HCT116 (cell line): ENCODE measurements at regions of chr10 and their contacts with region 1.

Region 1: GRCh38 chr10:101467286-101467770 is 113.4 kb downstream of the BTRC start:
- DNase-seq: peak; percentile 76
- ATAC-seq: peak; percentile 94
- H3K4me3 ChIP-seq: no peak overlapping the region
- H3K27ac ChIP-seq: no peak overlapping the region
- H3K4me1 ChIP-seq: no peaks in the 10 kb centered on the region
- H3K27me3 ChIP-seq: no peaks in the 10 kb centered on the region
- CTCF ChIP-seq: peak; percentile 85 to 99 (median 98)
- POLR2A ChIP-seq: no peak
- RAD21 ChIP-seq: peak; percentile 78

Region 2: GRCh38 chr10:101287997-101288635 is 179.2 kb before region 1 on chr10:
- CTCF ChIA-PET with region 1: interaction called, 30 read pairs
- POLR2A ChIA-PET with region 1: interaction called, 3 read pairs
- RAD21 ChIA-PET with region 1: interaction called in 1 of 2 experiments, 3 read pairs
- intact Hi-C with region 1: no loop called
- DNase-seq: peak; percentile 41
- ATAC-seq: peak; percentile 86
- H3K4me3 ChIP-seq: no peak overlapping the region
- H3K27ac ChIP-seq: no peak overlapping the region
- H3K4me1 ChIP-seq: no peaks in the 10 kb centered on the region; a peak in 1 of 4 replicates
- H3K27me3 ChIP-seq: no peaks in the 10 kb centered on the region
- CTCF ChIP-seq: peak; percentile 34 to 57 (median 45); a peak in 5 of 6 replicates
- POLR2A ChIP-seq: no peak
- RAD21 ChIP-seq: peak; percentile 72

Region 3: GRCh38 chr10:101379663-101380352 is 87.5 kb before region 1 on chr10:
- CTCF ChIA-PET with region 1: no interaction called
- POLR2A ChIA-PET with region 1: no interaction called
- RAD21 ChIA-PET with region 1: interaction called in 1 of 2 experiments, 10 read pairs
- intact Hi-C with region 1: no loop called
- DNase-seq: no peak
- ATAC-seq: no peak
- H3K4me3 ChIP-seq: no peak overlapping the region
- H3K27ac ChIP-seq: no peak overlapping the region
- H3K4me1 ChIP-seq: no peaks in the 10 kb centered on the region
- H3K27me3 ChIP-seq: no peaks in the 10 kb centered on the region
- CTCF ChIP-seq: no peak
- POLR2A ChIP-seq: no peak
- RAD21 ChIP-seq: no peak

Region 4: GRCh38 chr10:101446947-101447346 is 20.4 kb before region 1 on chr10:
- CTCF ChIA-PET with region 1: interaction called, 37 read pairs
- POLR2A ChIA-PET with region 1: no interaction called
- RAD21 ChIA-PET with region 1: no interaction called
- intact Hi-C with region 1: no loop called
- DNase-seq: no peak
- ATAC-seq: no peak
- H3K4me3 ChIP-seq: no peak overlapping the region
- H3K27ac ChIP-seq: no peak overlapping the region
- H3K4me1 ChIP-seq: no peaks in the 10 kb centered on the region
- H3K27me3 ChIP-seq: no peaks in the 10 kb centered on the region
- CTCF ChIP-seq: no peak
- POLR2A ChIP-seq: no peak
- RAD21 ChIP-seq: no peak

Region 5: DNA sequence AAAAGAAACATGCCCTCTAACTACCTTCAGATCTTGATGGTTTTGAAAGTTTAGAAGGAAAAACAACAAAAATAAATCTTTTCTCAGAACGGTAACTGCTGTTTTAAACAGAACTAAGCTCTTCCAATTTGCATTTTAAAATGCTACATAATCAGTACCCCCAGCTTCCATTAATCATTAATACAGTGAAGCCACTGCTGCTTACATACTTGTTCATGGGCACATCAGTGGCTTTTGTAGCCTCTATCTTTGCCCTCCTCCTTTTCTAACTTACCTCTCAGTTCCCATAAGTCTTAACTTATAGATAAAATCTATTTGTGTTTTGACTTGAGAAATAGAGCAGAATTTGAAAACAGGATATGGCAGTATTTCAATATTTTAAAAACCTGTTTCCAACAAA is 11.6 kb after region 1 on chr10:
- CTCF ChIA-PET with region 1: interaction called, 20 read pairs
- POLR2A ChIA-PET with region 1: no interaction called
- RAD21 ChIA-PET with region 1: no interaction called
- intact Hi-C with region 1: no loop called
- DNase-seq: no peak
- ATAC-seq: no peak
- H3K4me3 ChIP-seq: no peak overlapping the region
- H3K27ac ChIP-seq: no peak overlapping the region
- H3K4me1 ChIP-seq: no peaks in the 10 kb centered on the region
- H3K27me3 ChIP-seq: no peaks in the 10 kb centered on the region
- CTCF ChIP-seq: no peak
- POLR2A ChIP-seq: no peak
- RAD21 ChIP-seq: no peak

Region 6: DNA sequence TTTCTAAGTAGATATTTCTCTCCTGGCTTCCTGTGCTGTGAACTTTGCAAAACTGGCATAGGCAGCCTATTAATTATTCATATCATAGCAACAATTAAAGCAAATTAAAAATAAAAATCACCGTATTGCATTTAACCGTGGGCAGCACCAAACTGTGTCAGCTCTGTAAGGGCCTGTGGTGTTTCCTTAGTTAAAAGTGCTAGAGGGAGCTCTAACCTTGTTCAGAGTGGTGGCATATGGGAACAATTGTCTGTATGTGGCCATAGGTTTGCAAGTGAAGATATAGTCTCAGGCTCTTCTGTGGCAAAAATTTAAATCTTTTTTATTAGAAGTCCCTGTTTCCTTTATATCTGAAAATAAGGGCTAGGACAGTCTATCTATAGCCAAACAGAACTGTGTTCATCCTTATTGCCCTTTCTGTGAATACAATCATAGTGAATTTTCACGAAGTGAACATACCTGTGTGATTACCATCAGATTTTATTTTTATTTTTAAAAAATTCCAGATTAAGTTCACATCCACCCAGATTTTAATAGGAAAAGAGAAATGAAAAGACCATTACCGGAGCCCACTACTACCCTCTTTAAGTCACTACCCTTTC is 28.1 kb after region 1 on chr10:
- CTCF ChIA-PET with region 1: interaction called, 12 read pairs
- POLR2A ChIA-PET with region 1: no interaction called
- RAD21 ChIA-PET with region 1: no interaction called
- intact Hi-C with region 1: no loop called
- DNase-seq: peak; percentile 12
- ATAC-seq: peak; percentile 99
- H3K4me3 ChIP-seq: no peak overlapping the region
- H3K27ac ChIP-seq: no peak overlapping the region
- H3K4me1 ChIP-seq: no peaks in the 10 kb centered on the region
- H3K27me3 ChIP-seq: no peaks in the 10 kb centered on the region
- CTCF ChIP-seq: peak; percentile 47 to 60 (median 59); a peak in 5 of 6 replicates
- POLR2A ChIP-seq: no peak
- RAD21 ChIP-seq: peak; percentile 60